ENCODE measurements at regions of chr19 and their contacts with region 1.

Region 1: GRCh38 chr19:13109361-13110098 is 6.9 kb upstream of the LYL1 start:
- DNase-seq: no peak
- H3K4me3 ChIP-seq: no peak overlapping the region
- H3K27ac ChIP-seq: no peak overlapping the region
- H3K4me1 ChIP-seq: no peaks in the 10 kb centered on the region
- H3K27me3 ChIP-seq: no peaks in the 10 kb centered on the region
- CTCF ChIP-seq: no peak
- EP300 ChIP-seq: no peak
- POLR2A ChIP-seq: no peak
- RAD21 ChIP-seq: no peak

Region 2: GRCh38 chr19:13042443-13043130 is 66.9 kb before region 1 on chr19:
- CTCF ChIA-PET with region 1: no interaction called
- POLR2A ChIA-PET with region 1: no interaction called
- DNase-seq: no peak
- H3K4me3 ChIP-seq: no peak overlapping the region
- H3K27ac ChIP-seq: no peak overlapping the region
- H3K4me1 ChIP-seq: no peaks in the 10 kb centered on the region
- H3K27me3 ChIP-seq: peaks cover 9 to 58% (median 43%) of the 10 kb centered on the region in 4 experiments
- CTCF ChIP-seq: no peak
- EP300 ChIP-seq: no peak
- POLR2A ChIP-seq: no peak
- RAD21 ChIP-seq: no peak

Region 3: DNA sequence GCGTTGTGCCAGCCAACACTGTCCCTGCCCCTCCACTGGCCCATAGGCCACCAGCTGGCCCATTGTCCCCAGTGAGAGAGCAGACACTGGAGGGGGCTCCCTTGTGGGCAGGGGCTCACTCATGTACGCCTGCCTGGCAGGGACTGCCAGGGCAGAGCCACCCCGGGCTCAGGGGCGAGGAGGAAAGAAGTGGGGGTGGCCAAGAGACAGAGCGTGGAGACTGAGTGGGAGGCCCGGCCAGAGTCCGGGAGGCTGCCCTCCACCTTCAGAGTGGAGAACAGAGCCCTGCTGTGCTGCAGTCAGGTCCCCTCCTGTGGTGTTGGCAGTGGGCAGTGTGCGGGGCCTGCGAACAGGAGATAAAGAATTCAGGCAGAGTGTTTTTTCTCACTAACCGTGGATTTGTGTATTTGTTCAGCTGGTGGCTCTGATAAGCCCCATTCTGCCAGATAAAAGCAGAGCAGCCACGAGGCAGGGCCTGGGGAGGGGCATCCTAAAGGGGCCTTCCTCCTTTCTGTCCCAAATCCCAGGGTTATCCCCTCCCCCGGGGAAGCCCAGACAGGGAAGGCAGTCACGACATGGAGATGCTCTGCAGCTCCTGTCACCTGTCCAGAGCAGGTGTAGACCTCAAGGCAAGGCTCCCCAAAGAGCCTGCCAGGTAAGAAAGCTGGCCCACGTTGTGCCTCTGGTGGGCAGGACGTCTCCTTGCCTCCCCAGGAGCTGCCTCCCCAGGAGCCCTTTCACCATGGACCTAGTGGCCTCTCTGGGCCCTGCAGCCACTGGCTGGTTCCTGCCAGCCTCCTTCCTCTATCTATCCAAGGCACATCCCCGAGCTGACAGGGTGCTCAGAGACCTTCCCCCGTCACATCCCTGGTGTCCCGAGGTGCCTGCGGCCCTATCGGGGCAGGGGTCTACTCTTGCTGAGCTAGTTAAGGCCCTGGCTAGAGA is 39.8 kb before region 1 on chr19:
- CTCF ChIA-PET with region 1: no interaction called
- POLR2A ChIA-PET with region 1: no interaction called
- DNase-seq: no peak
- H3K4me3 ChIP-seq: no peak overlapping the region
- H3K27ac ChIP-seq: no peak overlapping the region
- H3K4me1 ChIP-seq: no peaks in the 10 kb centered on the region; a peak in 1 of 7 replicates
- H3K27me3 ChIP-seq: peaks cover 0 to 5% (median 2%) of the 10 kb centered on the region in 4 experiments; a peak in 3 of 7 replicates
- CTCF ChIP-seq: no peak
- EP300 ChIP-seq: no peak
- POLR2A ChIP-seq: no peak
- RAD21 ChIP-seq: no peak

Region 4: GRCh38 chr19:13099073-13099999 is 10.2 kb before region 1 on chr19:
- CTCF ChIA-PET with region 1: interaction called, 31 read pairs
- POLR2A ChIA-PET with region 1: interaction called, 141 read pairs
- DNase-seq: peak in 1 of 2 experiments; percentile 74
- H3K4me3 ChIP-seq: peak overlapping the region in 3 of 4 experiments; percentile 1 to 50 (median 12); a peak in 6 of 8 replicates
- H3K27ac ChIP-seq: no peak overlapping the region
- H3K4me1 ChIP-seq: peaks cover 0 to 28% (median 13%) of the 10 kb centered on the region in 4 experiments; a peak in 5 of 7 replicates
- H3K27me3 ChIP-seq: peaks cover 33 to 80% (median 67%) of the 10 kb centered on the region in 4 experiments
- CTCF ChIP-seq: no peak
- EP300 ChIP-seq: no peak
- POLR2A ChIP-seq: no peak
- RAD21 ChIP-seq: no peak

Region 5: GRCh38 chr19:13122980-13123957 is 13.7 kb after region 1 on chr19:
- CTCF ChIA-PET with region 1: interaction called, 10 read pairs
- POLR2A ChIA-PET with region 1: interaction called, 228 read pairs
- DNase-seq: no peak
- H3K4me3 ChIP-seq: no peak overlapping the region
- H3K27ac ChIP-seq: no peak overlapping the region; the same call in 1 of the 2 replicates
- H3K4me1 ChIP-seq: peaks cover 14 to 36% (median 25%) of the 10 kb centered on the region in 4 experiments
- H3K27me3 ChIP-seq: no peaks in the 10 kb centered on the region
- CTCF ChIP-seq: no peak
- EP300 ChIP-seq: no peak
- POLR2A ChIP-seq: no peak; a peak in 1 of 3 replicates
- RAD21 ChIP-seq: no peak